ENCODE measurements at regions of chr2 and their contacts with region 1.

Region 1: DNA sequence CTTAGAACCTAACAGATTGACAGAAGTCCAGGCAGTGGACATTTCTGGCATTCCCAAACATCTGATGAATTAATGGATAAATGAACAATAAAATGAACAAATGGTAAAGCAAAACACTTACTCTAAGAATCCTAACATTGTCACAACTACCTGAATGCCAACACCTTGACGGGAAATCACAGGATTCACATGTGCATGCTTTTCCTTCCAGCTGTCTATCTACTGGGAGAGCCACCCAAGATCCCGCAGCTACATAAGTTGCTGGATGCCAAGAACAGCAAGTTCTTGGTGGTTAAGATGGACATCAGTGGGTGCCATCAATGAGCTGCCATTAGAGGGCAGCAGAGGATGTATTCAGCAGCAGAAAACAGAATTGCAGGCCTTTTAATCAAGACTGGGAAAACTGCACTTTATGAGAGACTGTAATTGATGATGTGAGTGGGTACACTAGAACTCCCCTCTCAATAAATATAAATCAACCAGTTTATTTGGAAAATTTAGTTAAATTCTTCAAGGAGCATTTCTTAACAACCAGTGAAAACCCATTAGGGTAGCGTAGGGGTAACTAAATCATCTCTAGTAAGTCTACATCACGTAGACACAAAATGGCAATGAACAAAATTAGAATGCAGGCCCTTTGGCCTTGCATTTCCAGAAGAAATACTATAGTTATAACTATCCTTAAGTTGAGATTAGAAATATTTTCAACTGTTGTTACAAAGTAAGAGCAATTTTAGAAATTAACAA is 45.6 kb downstream of the SESTD1 start:
- DNase-seq: peak; percentile 28 to 93 (median 62)

Region 2: GRCh38 chr2:179340668-179341067 is 121.6 kb after region 1 on chr2:
- intact Hi-C with region 1: loop called (anchors 2 kb)
- DNase-seq: peak in 1 of 10 donors; percentile 13

Region 3: GRCh38 chr2:179422037-179422643 is 203.1 kb after region 1 on chr2:
- intact Hi-C with region 1: loop called (anchors 5 kb)
- DNase-seq: peak; percentile 41 to 95 (median 71)

Region 4: GRCh38 chr2:179711375-179711774 is 492.4 kb after region 1 on chr2:
- intact Hi-C with region 1: no loop called
- DNase-seq: no peak